Sigmoid colon (tissue), 7 donors: ENCODE measurements at regions of chr17 and their contacts with region 1.

Region 1: GRCh38 chr17:82246365-82247174 is 17.7 kb downstream of the SLC16A3 start:
- DNase-seq: no peak
- H3K4me3 ChIP-seq: no peak overlapping the region
- H3K27ac ChIP-seq: peak overlapping the region; percentile 79 to 90 (median 86)
- H3K4me1 ChIP-seq: peaks cover 0 to 82% (median 73%) of the 10 kb centered on the region in 4 donors
- H3K27me3 ChIP-seq: no peaks in the 10 kb centered on the region
- CTCF ChIP-seq: no peak
- EP300 ChIP-seq: no peak
- POLR2A ChIP-seq: no peak

Region 2: DNA sequence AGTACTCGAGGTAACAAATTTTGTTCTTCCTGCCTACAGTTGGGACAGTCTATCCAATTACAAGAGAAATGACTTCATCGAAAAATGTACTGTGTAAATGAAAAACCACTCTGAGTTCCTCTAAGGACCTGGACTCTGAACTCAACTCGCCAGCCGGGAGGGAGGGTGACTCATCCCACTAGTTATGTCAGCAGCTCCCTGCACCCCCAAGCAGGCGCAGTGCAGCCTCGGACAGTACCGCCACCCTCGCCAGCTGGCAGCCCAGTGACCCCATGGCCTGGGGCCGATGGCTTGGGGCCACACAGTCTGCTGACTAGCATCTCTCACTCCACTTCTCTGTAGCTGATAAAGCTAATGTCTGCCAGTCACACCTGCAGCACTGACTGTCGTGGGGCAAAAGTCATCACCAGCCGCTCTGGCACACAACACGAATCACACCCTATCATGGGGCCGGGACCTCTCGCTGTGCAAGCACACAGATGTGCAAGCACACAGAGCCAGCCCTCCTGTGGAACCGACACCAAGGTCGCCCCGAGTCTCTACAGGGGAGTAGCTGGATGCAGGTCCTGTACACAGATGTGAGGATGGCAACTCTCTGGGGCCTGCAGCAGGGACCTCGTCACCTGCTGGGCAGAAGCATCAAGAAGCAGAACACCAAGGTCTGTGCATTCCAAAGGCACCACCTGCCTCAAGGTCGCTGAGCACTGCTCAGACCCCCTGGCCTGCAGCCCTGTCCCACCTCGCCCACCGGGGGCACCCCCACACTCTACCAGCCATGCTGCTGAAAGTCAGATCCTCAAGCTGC is 21.2 kb after region 1 on chr17:
- intact Hi-C with region 1: loop called (anchors 2 kb)
- DNase-seq: peak; percentile 98
- H3K4me3 ChIP-seq: peak overlapping the region in 3 of 4 donors; percentile 26 to 35 (median 27)
- H3K27ac ChIP-seq: peak overlapping the region; percentile 89 to 100 (median 98)
- H3K4me1 ChIP-seq: peaks cover 0 to 75% (median 70%) of the 10 kb centered on the region in 4 donors
- H3K27me3 ChIP-seq: no peaks in the 10 kb centered on the region
- CTCF ChIP-seq: no peak
- EP300 ChIP-seq: peak in 2 of 4 donors; percentile 0 to 82
- POLR2A ChIP-seq: no peak

Region 3: DNA sequence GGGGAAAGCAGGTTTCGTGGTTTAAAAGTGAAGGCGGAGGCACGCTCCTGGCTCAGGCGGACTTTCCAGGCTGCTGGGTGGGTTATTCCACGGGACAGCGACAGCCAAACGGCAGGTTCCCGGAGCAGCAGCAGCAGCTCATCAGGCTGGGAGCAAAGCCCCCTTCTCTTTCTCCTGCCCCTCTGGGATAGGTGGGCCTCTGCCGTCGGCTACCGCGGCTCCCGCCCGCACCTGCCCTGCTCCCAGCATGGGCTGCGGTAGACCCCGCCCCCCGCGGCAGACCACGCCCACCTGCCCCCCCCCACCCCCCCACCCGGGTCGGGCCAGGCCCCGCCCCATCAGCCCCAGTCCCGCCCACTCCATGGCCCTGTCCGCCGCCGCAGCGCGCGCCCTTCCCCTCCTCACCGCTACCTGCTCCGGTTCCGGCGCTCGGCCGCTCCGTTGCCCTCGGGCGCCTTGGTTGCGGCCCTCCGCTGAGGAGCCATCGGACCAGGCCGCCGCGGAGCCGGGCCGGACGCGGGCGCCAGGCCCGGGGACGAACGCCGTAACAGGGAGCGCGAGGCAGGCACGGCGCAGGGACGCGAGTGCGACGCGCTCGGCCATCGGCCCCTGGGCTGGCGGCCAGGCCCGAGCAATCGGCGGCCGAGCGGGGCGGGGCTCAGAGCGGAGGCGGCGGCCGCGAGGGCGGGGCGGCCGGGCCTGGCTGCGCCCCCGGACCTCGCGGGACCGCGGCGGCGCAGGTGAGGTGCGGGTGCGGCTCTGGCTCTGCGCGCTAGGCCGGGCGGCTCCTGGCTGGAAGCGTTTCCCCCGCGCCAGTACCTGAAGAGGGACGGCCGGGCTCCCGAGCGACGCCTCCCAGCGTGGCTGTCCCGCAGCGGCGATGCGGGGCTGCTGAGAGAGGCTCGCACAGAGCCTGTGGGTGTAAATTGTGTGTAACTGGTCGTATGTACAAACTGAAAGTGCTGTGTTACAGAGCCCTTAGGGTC is 171.7 kb after region 1 on chr17 and contains the starts of genes HEXD and OGFOD3:
- intact Hi-C with region 1: no loop called
- DNase-seq: peak; percentile 86
- H3K4me3 ChIP-seq: peak within 1 kb of the TSS; percentile 55 to 77 (median 74)
- H3K27ac ChIP-seq: peak within 1 kb of the TSS; percentile 86 to 94 (median 89)
- H3K4me1 ChIP-seq: peaks cover 0 to 26% (median 12%) of the 10 kb centered on the region in 4 donors
- H3K27me3 ChIP-seq: no peaks in the 10 kb centered on the region
- CTCF ChIP-seq: no peak
- EP300 ChIP-seq: no peak
- POLR2A ChIP-seq: no peak
- total RNA-seq, gene HEXD: 15.8 to 42.9 (median 24.0) TPM
- total RNA-seq, gene OGFOD3: 14.1 to 28.2 (median 22.1) TPM

Region 4: GRCh38 chr17:82434216-82434565 is 187.6 kb after region 1 on chr17:
- intact Hi-C with region 1: no loop called
- DNase-seq: no peak
- H3K4me3 ChIP-seq: no peak overlapping the region
- H3K27ac ChIP-seq: no peak overlapping the region
- H3K4me1 ChIP-seq: no peaks in the 10 kb centered on the region
- H3K27me3 ChIP-seq: no peaks in the 10 kb centered on the region
- CTCF ChIP-seq: no peak
- EP300 ChIP-seq: no peak
- POLR2A ChIP-seq: no peak